Panc1 (cell line): ENCODE measurements at regions of chr2 and their contacts with region 1.

Region 1: GRCh38 chr2:121722479-121722878 is 14.2 kb downstream of the NIFK start:
- DNase-seq: peak; percentile 71
- ATAC-seq: 0 out of 2 replicates have a peak, but pooled peaks have one; percentile 57
- H3K4me3 ChIP-seq: no peak overlapping the region
- H3K27ac ChIP-seq: no peak overlapping the region
- H3K4me1 ChIP-seq: no peaks in the 10 kb centered on the region
- H3K27me3 ChIP-seq: no peaks in the 10 kb centered on the region
- CTCF ChIP-seq: no peak

Region 2: GRCh38 chr2:121345887-121346286 is 376.6 kb before region 1 on chr2:
- CTCF ChIA-PET with region 1: no interaction called
- POLR2A ChIA-PET with region 1: no interaction called
- in situ Hi-C with region 1: no loop called
- intact Hi-C with region 1: no loop called
- DNase-seq: no peak
- ATAC-seq: no peak
- H3K4me3 ChIP-seq: no peak overlapping the region
- H3K27ac ChIP-seq: no peak overlapping the region
- H3K4me1 ChIP-seq: no peaks in the 10 kb centered on the region
- H3K27me3 ChIP-seq: no peaks in the 10 kb centered on the region
- CTCF ChIP-seq: no peak

Region 3: GRCh38 chr2:121400201-121400600 is 322.3 kb before region 1 on chr2:
- CTCF ChIA-PET with region 1: no interaction called
- POLR2A ChIA-PET with region 1: no interaction called
- in situ Hi-C with region 1: no loop called
- intact Hi-C with region 1: loop called (anchors 5 kb)
- DNase-seq: no peak
- ATAC-seq: no peak
- H3K4me3 ChIP-seq: no peak overlapping the region
- H3K27ac ChIP-seq: no peak overlapping the region
- H3K4me1 ChIP-seq: no peaks in the 10 kb centered on the region
- H3K27me3 ChIP-seq: no peaks in the 10 kb centered on the region
- CTCF ChIP-seq: no peak

Region 4: GRCh38 chr2:121530212-121530705 is 192.2 kb before region 1 on chr2:
- CTCF ChIA-PET with region 1: interaction called, 7 read pairs
- POLR2A ChIA-PET with region 1: no interaction called
- in situ Hi-C with region 1: no loop called
- intact Hi-C with region 1: loop called (anchors 2 kb)
- DNase-seq: peak; percentile 22
- ATAC-seq: peak; percentile 86
- H3K4me3 ChIP-seq: peak overlapping the region; percentile 79 to 80
- H3K27ac ChIP-seq: peak overlapping the region; percentile 96
- H3K4me1 ChIP-seq: peaks cover 32% of the 10 kb centered on the region
- H3K27me3 ChIP-seq: no peaks in the 10 kb centered on the region
- CTCF ChIP-seq: no peak

Region 5: DNA sequence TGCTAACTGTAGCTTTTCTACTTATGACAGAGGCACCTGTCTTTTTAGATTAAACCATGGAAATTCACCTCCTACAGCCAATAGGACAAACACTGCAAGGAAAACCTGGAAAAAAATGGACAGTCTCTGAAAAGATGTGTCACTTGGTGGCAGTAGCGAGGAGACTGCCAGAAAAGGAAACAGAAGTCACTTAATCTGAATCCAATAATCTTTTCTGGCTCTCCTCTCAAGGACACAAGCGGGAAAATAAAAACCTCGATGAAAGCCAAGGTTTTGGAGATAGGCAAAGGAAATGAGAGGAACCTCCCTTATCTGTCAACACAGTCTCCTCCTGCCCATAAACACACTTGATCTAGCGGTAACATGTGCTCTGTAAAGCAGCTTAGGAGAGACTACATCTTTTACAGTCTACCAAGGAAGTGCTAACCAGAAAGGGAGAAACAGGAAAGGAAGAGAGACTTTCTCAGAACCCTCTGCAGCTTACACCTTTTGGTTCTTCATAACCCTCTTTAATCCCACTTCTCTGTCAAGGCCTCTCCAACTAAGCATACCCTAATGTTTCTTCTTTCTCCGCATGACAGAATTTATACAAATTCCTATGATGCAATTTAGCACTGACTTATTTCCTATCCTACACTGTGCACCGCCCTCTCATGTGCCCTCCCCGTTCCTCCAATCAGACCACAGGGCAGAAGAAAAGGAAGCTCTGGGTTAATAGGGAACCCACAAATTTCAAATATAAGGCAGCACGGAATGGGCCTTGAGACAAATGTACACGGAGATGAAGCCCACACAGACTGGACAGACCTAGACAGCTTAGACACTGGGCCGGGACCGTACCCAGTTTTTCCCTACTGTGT is 126.0 kb before region 1 on chr2:
- CTCF ChIA-PET with region 1: no interaction called
- POLR2A ChIA-PET with region 1: no interaction called
- in situ Hi-C with region 1: no loop called
- intact Hi-C with region 1: loop called (anchors 5 kb)
- DNase-seq: peak; percentile 64
- ATAC-seq: peak; percentile 87
- H3K4me3 ChIP-seq: peak overlapping the region in 1 of 2 experiments; percentile 34; a peak in 3 of 4 replicates
- H3K27ac ChIP-seq: peak overlapping the region; percentile 79
- H3K4me1 ChIP-seq: peaks cover 12% of the 10 kb centered on the region; the same call in 1 of the 2 replicates
- H3K27me3 ChIP-seq: no peaks in the 10 kb centered on the region
- CTCF ChIP-seq: peak; percentile 74